H1 (cell line): ENCODE measurements at regions of chr6 and their contacts with region 1.

Region 1: GRCh38 chr6:21593412-21593926 is at the start of gene SOX4:
- DNase-seq: peak; percentile 91 to 97
- H3K4me3 ChIP-seq: peak within 1 kb of the TSS; percentile 80 to 97 (median 84)
- H3K27ac ChIP-seq: peak within 1 kb of the TSS; percentile 65
- H3K4me1 ChIP-seq: peaks cover 0 to 3% (median 2%) of the 10 kb centered on the region in 4 experiments; a peak in 5 of 7 replicates
- H3K27me3 ChIP-seq: peaks cover 0 to 1% (median under 1%) of the 10 kb centered on the region in 4 experiments; a peak in 3 of 7 replicates
- CTCF ChIP-seq: no peak
- EP300 ChIP-seq: no peak
- POLR2A ChIP-seq: peak; percentile 100
- RAD21 ChIP-seq: peak; percentile 7 to 16; a peak in 1 of 4 replicates
- total RNA-seq, gene SOX4: 162 and 169 TPM in 2 replicates

Region 2: DNA sequence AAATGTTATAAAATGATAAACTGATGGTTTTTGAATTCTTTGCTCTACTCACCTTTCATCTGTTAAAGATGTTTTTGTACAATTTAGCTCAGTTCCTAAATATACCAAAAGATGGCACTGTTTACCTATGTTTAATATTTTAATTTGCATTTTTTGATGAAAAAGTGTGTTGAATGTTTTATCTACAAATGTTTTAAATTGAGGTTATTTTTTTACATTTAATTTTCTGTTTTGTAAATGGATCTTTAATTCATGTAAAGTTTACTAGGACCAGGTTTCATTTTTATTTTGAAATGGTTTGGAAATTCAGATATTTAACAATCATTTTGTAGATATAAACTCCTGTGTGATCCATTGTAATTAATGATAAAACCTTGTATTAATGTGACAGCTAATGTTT is 1029.2 kb before region 1 on chr6:
- CTCF ChIA-PET with region 1: interaction called, 10 read pairs
- POLR2A ChIA-PET with region 1: no interaction called
- DNase-seq: no peak
- H3K4me3 ChIP-seq: no peak overlapping the region
- H3K27ac ChIP-seq: no peak overlapping the region
- H3K4me1 ChIP-seq: peaks cover 0 to 5% (median 0%) of the 10 kb centered on the region in 4 experiments; a peak in 1 of 7 replicates
- H3K27me3 ChIP-seq: no peaks in the 10 kb centered on the region
- CTCF ChIP-seq: peak in 1 of 3 experiments; percentile 26; a peak in 1 of 4 replicates
- EP300 ChIP-seq: no peak
- POLR2A ChIP-seq: no peak
- RAD21 ChIP-seq: peak in 1 of 2 experiments; percentile 53; a peak in 3 of 4 replicates

Region 3: GRCh38 chr6:21610341-21610740 is 16.9 kb after region 1 on chr6:
- CTCF ChIA-PET with region 1: interaction called, 6 read pairs
- POLR2A ChIA-PET with region 1: interaction called, 39 read pairs
- DNase-seq: no peak
- H3K4me3 ChIP-seq: no peak overlapping the region
- H3K27ac ChIP-seq: no peak overlapping the region
- H3K4me1 ChIP-seq: peaks cover 0 to 3% (median 1%) of the 10 kb centered on the region in 4 experiments; a peak in 1 of 7 replicates
- H3K27me3 ChIP-seq: no peaks in the 10 kb centered on the region
- CTCF ChIP-seq: no peak
- EP300 ChIP-seq: no peak
- POLR2A ChIP-seq: no peak
- RAD21 ChIP-seq: no peak

Region 4: GRCh38 chr6:21664314-21665109 is 71.0 kb after region 1 on chr6:
- CTCF ChIA-PET with region 1: interaction called, 10 read pairs
- POLR2A ChIA-PET with region 1: interaction called, 161 read pairs
- DNase-seq: peak in 1 of 2 experiments; percentile 79
- H3K4me3 ChIP-seq: peak overlapping the region; percentile 49 to 95 (median 88)
- H3K27ac ChIP-seq: peak overlapping the region; percentile 87
- H3K4me1 ChIP-seq: peaks cover 0 to 6% (median 3%) of the 10 kb centered on the region in 4 experiments; a peak in 5 of 7 replicates
- H3K27me3 ChIP-seq: peaks cover 0 to 3% (median 0%) of the 10 kb centered on the region in 4 experiments; a peak in 1 of 7 replicates
- CTCF ChIP-seq: no peak
- EP300 ChIP-seq: peak in 1 of 2 experiments; percentile 69; a peak in 1 of 3 replicates
- POLR2A ChIP-seq: peak; percentile 7 to 73
- RAD21 ChIP-seq: peak in 1 of 2 experiments; percentile 8; a peak in 1 of 4 replicates

Region 5: DNA sequence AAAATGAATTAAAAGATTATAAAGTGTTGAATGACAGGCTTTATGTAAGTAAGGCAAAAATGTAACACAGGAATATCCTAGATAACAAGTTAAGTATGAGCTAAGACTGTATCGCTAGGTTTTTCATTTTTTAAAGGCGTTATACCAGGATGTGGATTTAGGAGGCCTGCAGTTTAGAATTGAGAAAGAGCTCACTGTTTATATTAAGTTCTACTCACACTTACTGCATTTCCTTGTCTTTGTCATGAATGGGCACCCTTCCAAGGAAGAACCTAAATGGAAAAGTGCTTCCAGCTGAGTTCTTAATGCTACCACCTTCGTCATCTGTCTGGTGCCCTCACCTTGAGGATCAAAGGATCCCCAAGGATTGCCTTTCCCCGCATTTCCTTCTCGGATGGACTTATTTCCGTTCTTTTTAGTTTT is 148.8 kb after region 1 on chr6:
- CTCF ChIA-PET with region 1: interaction called, 3 read pairs
- POLR2A ChIA-PET with region 1: interaction called, 25 read pairs
- DNase-seq: no peak
- H3K4me3 ChIP-seq: peak overlapping the region in 2 of 4 experiments; percentile 3 to 51; a peak in 3 of 8 replicates
- H3K27ac ChIP-seq: no peak overlapping the region; the same call in 1 of the 2 replicates
- H3K4me1 ChIP-seq: peaks cover 10 to 42% (median 27%) of the 10 kb centered on the region in 4 experiments
- H3K27me3 ChIP-seq: no peaks in the 10 kb centered on the region
- CTCF ChIP-seq: no peak
- EP300 ChIP-seq: peak in 1 of 2 experiments; percentile 30; a peak in 1 of 3 replicates
- POLR2A ChIP-seq: no peak
- RAD21 ChIP-seq: no peak